Activated T-helper 1 cell treated with anti-CD3 and anti-CD28 coated beads, Interleukin-12 subunit alpha, Interleukin-12 subunit beta, Interleukin-2, Interleukin-4 antibody, amounts not matched to agents 30 ng/mL and 10 ng/mL and 1 ng/mL, durations not matched to agents 14 hours and 24 hours and 36 hours (primary cell): ENCODE measurements at regions of chr3 and their contacts with region 1.

Region 1: GRCh38 chr3:185976977-185977678 is 39.3 kb upstream of the TRA2B start:
- DNase-seq: peak; percentile 71
- H3K4me3 Mint-ChIP-seq: peak overlapping the region; percentile 11
- H3K27ac Mint-ChIP-seq: peak overlapping the region; percentile 82
- H3K4me1 Mint-ChIP-seq: peaks cover 18% of the 10 kb centered on the region
- H3K27me3 Mint-ChIP-seq: peaks cover 37% of the 10 kb centered on the region

Region 2: GRCh38 chr3:185942907-185943759 is 34.0 kb before region 1 on chr3:
- intact Hi-C with region 1: loop called (anchors 1 kb)
- DNase-seq: peak; percentile 78
- H3K4me3 Mint-ChIP-seq: no peak overlapping the region
- H3K27ac Mint-ChIP-seq: no peak overlapping the region
- H3K4me1 Mint-ChIP-seq: peaks cover 23% of the 10 kb centered on the region
- H3K27me3 Mint-ChIP-seq: peaks cover 17% of the 10 kb centered on the region

Region 3: GRCh38 chr3:186060222-186060621 is 83.1 kb after region 1 on chr3:
- intact Hi-C with region 1: loop called (anchors 10 kb)
- DNase-seq: peak; percentile 3
- H3K4me3 Mint-ChIP-seq: no peak overlapping the region
- H3K27ac Mint-ChIP-seq: no peak overlapping the region
- H3K4me1 Mint-ChIP-seq: peaks cover 13% of the 10 kb centered on the region
- H3K27me3 Mint-ChIP-seq: peaks cover 57% of the 10 kb centered on the region

Region 4: GRCh38 chr3:186241910-186242821 is 265.0 kb after region 1 on chr3:
- intact Hi-C with region 1: loop called (anchors 1 kb)
- DNase-seq: peak; percentile 30
- H3K4me3 Mint-ChIP-seq: peak overlapping the region; percentile 25
- H3K27ac Mint-ChIP-seq: no peak overlapping the region
- H3K4me1 Mint-ChIP-seq: no peaks in the 10 kb centered on the region
- H3K27me3 Mint-ChIP-seq: peaks cover 19% of the 10 kb centered on the region

Region 5: GRCh38 chr3:186259612-186260383 is 282.7 kb after region 1 on chr3:
- intact Hi-C with region 1: loop called (anchors 1 kb)
- DNase-seq: peak; percentile 37
- H3K4me3 Mint-ChIP-seq: no peak overlapping the region
- H3K27ac Mint-ChIP-seq: peak overlapping the region; percentile 25
- H3K4me1 Mint-ChIP-seq: peaks cover 21% of the 10 kb centered on the region
- H3K27me3 Mint-ChIP-seq: peaks cover 15% of the 10 kb centered on the region

Region 6: DNA sequence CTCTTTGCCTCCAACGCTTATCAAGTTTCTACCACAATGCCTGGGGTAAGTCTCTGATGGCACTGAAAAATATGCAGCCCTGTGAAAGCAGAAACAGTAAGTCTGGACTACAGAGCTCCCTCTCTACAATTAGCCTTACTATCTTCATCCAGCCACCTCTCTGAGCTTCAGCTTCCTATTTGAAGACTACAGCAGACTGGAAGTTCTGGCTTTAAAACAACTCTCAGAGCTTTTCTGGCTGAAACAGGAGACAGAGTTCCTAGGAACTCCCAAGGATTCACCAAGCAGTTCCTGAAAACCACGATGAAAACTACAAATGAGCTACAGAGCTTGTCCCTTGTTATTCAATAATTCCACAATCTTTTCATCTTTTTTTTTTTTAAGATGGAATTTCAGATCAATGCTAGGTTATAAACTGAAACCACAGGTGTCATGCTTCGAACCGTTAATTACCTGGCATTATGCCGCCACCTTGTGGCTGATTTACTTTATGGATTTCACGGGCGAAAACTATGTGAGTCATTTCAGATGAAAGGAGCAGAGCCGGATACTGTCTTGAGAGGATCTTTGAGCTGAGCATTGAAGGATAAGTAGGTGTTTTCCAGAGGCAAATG is 563.2 kb after region 1 on chr3:
- intact Hi-C with region 1: loop called (anchors 1 kb)
- DNase-seq: peak; percentile 76
- H3K4me3 Mint-ChIP-seq: no peak overlapping the region
- H3K27ac Mint-ChIP-seq: no peak overlapping the region
- H3K4me1 Mint-ChIP-seq: peaks cover 55% of the 10 kb centered on the region
- H3K27me3 Mint-ChIP-seq: no peaks in the 10 kb centered on the region